H1 (cell line): ENCODE measurements at regions of chr15 and their contacts with region 1.

Region 1: DNA sequence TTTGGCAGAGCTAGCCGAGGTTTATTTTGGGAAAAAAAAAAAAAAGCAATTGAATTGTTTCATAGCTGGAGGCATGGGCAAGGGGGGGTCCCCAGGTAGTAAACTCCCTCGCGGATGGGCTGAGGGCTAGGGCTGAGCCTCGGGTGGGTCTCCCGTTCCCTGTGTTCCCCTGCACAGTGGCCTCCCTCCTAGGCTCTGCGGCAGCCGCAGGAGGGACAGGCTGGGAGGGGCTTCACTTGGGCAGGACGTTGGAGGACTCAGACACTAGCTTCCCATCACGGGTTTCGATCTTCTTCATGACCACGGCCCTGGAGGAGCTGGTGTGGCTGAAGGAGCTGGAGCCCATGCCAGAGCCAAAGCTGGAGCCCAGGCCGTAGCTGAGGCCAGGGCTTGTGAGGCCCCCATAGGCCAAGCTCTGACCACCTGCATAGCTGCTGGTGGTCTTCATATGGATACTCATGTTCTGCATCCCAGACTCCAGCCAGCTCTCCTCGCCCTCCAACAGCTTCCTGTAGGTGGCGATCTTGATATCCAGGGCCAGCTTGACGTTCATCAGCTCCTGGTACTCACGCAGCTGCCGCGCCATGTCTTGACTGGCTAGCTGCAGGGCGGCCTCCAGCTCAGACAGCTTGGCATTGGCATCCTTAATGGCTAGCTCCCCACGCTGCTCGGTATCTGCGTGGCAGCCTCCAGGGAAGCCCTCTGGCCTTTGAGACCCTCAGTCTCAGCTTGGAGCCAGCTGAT is 64.0 kb upstream of the CDAN1 start:
- DNase-seq: peak in 1 of 2 experiments; percentile 73
- H3K4me3 ChIP-seq: no peak overlapping the region
- H3K27ac ChIP-seq: no peak overlapping the region
- H3K4me1 ChIP-seq: no peaks in the 10 kb centered on the region
- H3K27me3 ChIP-seq: no peaks in the 10 kb centered on the region
- CTCF ChIP-seq: peak; percentile 52 to 73 (median 72)
- EP300 ChIP-seq: no peak
- POLR2A ChIP-seq: no peak
- RAD21 ChIP-seq: peak; percentile 62 to 67

Region 2: GRCh38 chr15:42811435-42811834 is 10.5 kb after region 1 on chr15:
- CTCF ChIA-PET with region 1: interaction called, 41 read pairs
- POLR2A ChIA-PET with region 1: no interaction called
- DNase-seq: no peak
- H3K4me3 ChIP-seq: no peak overlapping the region
- H3K27ac ChIP-seq: no peak overlapping the region
- H3K4me1 ChIP-seq: no peaks in the 10 kb centered on the region
- H3K27me3 ChIP-seq: no peaks in the 10 kb centered on the region
- CTCF ChIP-seq: no peak
- EP300 ChIP-seq: no peak
- POLR2A ChIP-seq: no peak
- RAD21 ChIP-seq: no peak

Region 3: DNA sequence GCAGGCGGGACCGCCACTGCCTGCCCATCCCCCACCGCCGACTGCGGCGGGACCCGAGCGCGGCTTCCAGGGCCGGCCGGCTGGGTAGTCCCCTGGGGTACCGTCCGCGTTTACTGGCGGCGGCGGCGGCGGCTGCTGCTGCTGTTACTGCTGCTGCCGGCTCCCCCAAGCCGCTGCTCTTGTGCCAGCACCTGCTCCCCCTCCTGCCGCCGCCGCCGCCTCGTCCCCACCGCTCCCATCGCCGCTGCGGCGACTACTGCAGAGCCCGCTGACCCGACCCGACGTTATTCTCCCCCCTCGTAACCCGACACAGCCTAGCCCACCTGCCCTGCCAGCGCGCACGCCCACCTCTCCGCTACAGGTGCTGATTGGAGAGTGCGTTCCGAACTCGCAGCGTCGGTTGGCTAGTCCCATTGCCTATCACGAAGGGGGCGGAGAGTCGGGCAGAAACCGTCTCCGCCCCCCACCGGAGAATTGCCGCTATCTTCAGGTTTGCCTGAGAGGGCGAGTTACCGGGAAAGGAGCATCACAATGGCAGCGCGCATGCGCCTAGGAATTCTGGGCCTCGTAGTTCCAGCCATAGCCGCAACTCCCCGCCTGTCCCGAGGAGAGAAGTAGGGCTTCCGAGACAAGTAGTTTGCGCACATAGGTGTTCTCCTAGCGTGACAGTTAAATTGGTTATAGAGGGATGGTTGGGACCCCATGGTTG is 119.8 kb after region 1 on chr15 and contains the start of gene TTBK2:
- CTCF ChIA-PET with region 1: interaction called, 24 read pairs
- POLR2A ChIA-PET with region 1: no interaction called
- DNase-seq: peak; percentile 97 to 98
- H3K4me3 ChIP-seq: peak within 1 kb of the TSS; percentile 90 to 96 (median 94)
- H3K27ac ChIP-seq: no peak within 1 kb of the TSS
- H3K4me1 ChIP-seq: peaks cover 0 to 6% (median 0%) of the 10 kb centered on the region in 4 experiments; a peak in 2 of 7 replicates
- H3K27me3 ChIP-seq: peaks cover 0 to 5% (median 2%) of the 10 kb centered on the region in 4 experiments; a peak in 2 of 7 replicates
- CTCF ChIP-seq: no peak
- EP300 ChIP-seq: no peak
- POLR2A ChIP-seq: peak in 1 of 2 experiments; percentile 62; a peak in 1 of 3 replicates
- RAD21 ChIP-seq: no peak
- total RNA-seq, gene TTBK2: 13.1 and 18.2 TPM in 2 replicates